Breast epithelium (tissue), 4 donors: ENCODE measurements at regions of chr15 and their contacts with region 1.

Region 1: GRCh38 chr15:60191821-60192220 is 187.7 kb downstream of the FOXB1 start:
- DNase-seq: no peak
- H3K4me3 ChIP-seq: no peak overlapping the region
- H3K27ac ChIP-seq: no peak overlapping the region
- H3K4me1 ChIP-seq: no peaks in the 10 kb centered on the region
- H3K27me3 ChIP-seq: peaks cover 0 to 6% of the 10 kb centered on the region in 2 donors
- CTCF ChIP-seq: no peak
- POLR2A ChIP-seq: no peak

Region 2: DNA sequence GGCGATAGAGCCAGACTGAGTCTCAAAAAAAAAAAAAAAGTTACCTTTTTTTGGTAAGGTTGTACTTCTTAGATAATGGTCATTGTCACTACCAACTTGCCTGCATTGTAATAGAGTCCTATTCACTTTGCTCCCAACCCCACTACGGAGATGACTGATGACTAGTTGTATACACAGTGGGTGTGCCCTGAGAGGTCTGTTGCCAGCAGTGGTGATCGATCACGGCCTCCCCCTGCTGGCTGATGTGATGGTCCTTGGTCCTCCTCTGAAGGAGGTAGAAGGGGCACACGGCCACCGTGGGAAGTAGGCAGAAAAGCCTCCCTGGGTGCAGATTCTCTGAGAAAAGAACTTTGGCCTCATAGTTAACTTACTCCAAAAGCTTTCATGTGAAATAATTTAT is 569.5 kb before region 1 on chr15:
- intact Hi-C with region 1: loop called (anchors 5 kb)
- DNase-seq: no peak
- H3K4me3 ChIP-seq: no peak overlapping the region
- H3K27ac ChIP-seq: no peak overlapping the region
- H3K4me1 ChIP-seq: no peaks in the 10 kb centered on the region
- H3K27me3 ChIP-seq: no peaks in the 10 kb centered on the region
- CTCF ChIP-seq: no peak
- POLR2A ChIP-seq: no peak

Region 3: DNA sequence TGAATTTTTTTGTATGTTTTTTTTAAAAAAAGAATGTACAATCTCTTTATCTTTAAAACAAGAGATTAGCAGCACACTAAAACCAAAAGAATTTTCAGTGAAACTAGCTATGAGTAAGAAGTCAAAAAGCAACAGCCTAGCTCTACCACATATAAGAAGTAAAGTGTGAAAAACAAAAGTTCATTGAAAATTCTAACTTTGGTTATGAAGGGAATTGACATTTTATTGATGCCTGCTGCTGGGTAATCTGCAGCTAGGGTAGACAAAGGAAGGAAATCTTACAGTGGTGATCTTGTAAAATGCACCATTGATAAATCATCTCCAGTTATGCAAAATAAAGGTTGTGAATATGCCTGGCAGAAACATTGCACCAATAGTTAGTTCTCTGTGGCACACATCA is 225.6 kb before region 1 on chr15:
- intact Hi-C with region 1: no loop called
- DNase-seq: no peak
- H3K4me3 ChIP-seq: no peak overlapping the region
- H3K27ac ChIP-seq: no peak overlapping the region
- H3K4me1 ChIP-seq: no peaks in the 10 kb centered on the region
- H3K27me3 ChIP-seq: peaks cover 0 to 3% of the 10 kb centered on the region in 2 donors
- CTCF ChIP-seq: no peak
- POLR2A ChIP-seq: no peak

Region 4: GRCh38 chr15:60162241-60162967 is 29.4 kb before region 1 on chr15:
- intact Hi-C with region 1: no loop called
- DNase-seq: no peak
- H3K4me3 ChIP-seq: no peak overlapping the region
- H3K27ac ChIP-seq: no peak overlapping the region
- H3K4me1 ChIP-seq: no peaks in the 10 kb centered on the region
- H3K27me3 ChIP-seq: no peaks in the 10 kb centered on the region
- CTCF ChIP-seq: no peak
- POLR2A ChIP-seq: no peak